Activated CD4-positive, alpha-beta T cell treated with anti-CD3 and anti-CD28 coated beads, Interleukin-2, amount 10 ng/mL, durations not matched to agents 24 days and 14 days (primary cell): ENCODE measurements at regions of chr1 and their contacts with region 1.

Region 1: DNA sequence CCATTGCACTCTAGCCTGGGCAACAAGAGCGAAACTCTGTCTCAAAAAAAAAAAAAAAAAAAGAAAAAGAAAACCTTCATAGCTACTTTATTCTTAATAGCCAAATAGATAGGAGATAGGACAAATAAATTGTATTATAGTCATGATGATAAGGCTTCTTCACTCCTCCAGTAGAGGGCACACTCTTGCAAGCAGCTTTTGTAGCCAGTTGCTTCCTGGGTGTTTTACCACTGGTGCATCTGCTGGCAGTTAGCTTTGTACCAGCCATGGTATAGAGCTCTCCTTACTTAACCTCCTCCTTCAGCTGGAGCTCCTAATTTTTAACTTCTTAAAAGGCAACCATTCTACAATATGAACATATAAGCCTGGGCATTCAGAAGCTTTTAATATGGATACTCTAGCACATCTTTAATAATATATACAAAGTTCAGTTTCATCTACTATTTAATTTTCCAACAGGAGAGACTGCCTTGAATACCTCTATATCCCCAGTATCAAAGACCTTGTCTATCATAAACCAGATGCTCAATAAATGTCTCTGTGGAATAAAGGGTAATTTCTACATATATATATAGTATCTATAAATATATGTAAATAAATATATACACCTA is 35.8 kb downstream of the EVI5 start:
- DNase-seq: peak; percentile 80
- H3K4me3 Mint-ChIP-seq: no peak overlapping the region
- H3K27ac Mint-ChIP-seq: no peak overlapping the region
- H3K4me1 Mint-ChIP-seq: no peaks in the 10 kb centered on the region
- H3K27me3 Mint-ChIP-seq: peaks cover 16% of the 10 kb centered on the region

Region 2: DNA sequence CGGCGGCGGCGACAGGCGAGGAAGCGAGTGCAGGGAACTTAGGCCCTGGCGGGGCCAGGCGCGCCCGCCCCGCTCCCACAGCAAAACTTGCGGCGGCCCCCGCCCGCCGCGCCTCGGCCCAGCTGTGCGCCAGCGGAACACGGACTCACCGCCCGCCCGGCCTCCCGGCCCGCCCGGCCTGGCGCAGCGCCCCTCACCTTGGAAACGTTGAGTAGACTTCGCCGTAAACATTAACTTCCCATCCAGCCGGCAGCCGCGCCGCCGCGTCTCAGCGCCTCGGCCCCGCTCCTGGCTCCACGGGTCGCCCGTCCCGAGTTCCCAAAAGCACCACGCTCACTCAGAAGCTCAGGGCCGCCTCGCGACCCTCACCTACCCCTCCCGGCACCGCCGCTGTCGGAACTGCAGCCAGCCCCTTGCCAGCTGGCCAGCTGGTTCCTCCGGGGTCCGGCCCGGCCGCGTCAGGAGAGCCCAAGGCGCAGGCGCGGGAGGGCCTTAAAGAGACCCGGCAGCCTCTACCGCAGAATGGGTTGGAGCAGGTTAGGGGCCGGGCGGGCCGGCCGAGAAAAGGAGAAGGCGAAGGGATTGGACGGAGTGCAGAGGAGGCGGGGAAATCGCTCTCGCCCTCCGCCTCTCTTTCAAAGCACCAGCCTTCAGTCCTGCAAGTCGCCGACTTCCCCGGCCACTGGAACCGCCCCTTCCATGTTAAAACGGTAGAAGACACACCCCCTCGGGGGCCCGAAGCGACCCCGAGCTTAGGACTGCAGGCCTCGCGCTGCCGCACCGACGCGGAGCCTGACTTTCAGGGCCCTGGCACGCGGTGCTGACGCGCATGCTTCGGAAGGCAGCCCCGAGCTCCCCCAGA is 35.7 kb after region 1 on chr1 and contains the start of gene EVI5:
- intact Hi-C with region 1: no loop called
- DNase-seq: peak; percentile 80
- H3K4me3 Mint-ChIP-seq: peak within 1 kb of the TSS; percentile 77
- H3K27ac Mint-ChIP-seq: peak within 1 kb of the TSS; percentile 4
- H3K4me1 Mint-ChIP-seq: peaks cover 16% of the 10 kb centered on the region
- H3K27me3 Mint-ChIP-seq: peaks cover 75% of the 10 kb centered on the region
- total RNA-seq, gene EVI5: 24.6 and 25.8 TPM in 2 replicates

Region 3: GRCh38 chr1:92817986-92818764 is 69.0 kb after region 1 on chr1:
- intact Hi-C with region 1: loop called (anchors 1 kb)
- DNase-seq: peak; percentile 72
- H3K4me3 Mint-ChIP-seq: no peak overlapping the region
- H3K27ac Mint-ChIP-seq: no peak overlapping the region
- H3K4me1 Mint-ChIP-seq: no peaks in the 10 kb centered on the region
- H3K27me3 Mint-ChIP-seq: peaks cover 32% of the 10 kb centered on the region